T-cell (primary cell): ENCODE measurements at regions of chr10 and their contacts with region 1.

Region 1: GRCh38 chr10:116683821-116684220 is 58.5 kb downstream of the HSPA12A start:
- DNase-seq: no peak
- ATAC-seq: no peak
- H3K4me3 ChIP-seq: no peak overlapping the region
- H3K4me3 Mint-ChIP-seq: no peak overlapping the region
- H3K27ac ChIP-seq: no peak overlapping the region
- H3K27ac Mint-ChIP-seq: no peak overlapping the region
- H3K4me1 ChIP-seq: peaks cover 0 to 5% of the 10 kb centered on the region in 2 experiments
- H3K4me1 Mint-ChIP-seq: peaks cover 0 to 2% (median 0%) of the 10 kb centered on the region in 3 donors
- H3K27me3 ChIP-seq: peaks cover 0 to 24% of the 10 kb centered on the region in 2 experiments
- H3K27me3 Mint-ChIP-seq: peaks cover 20 to 43% of the 10 kb centered on the region in 2 donors

Region 2: GRCh38 chr10:116787893-116788665 is 104.3 kb after region 1 on chr10:
- CTCF ChIA-PET with region 1: interaction called, 23 read pairs
- POLR2A ChIA-PET with region 1: no interaction called
- DNase-seq: peak; percentile 60 to 83 (median 73)
- ATAC-seq: peak; percentile 86 to 96 (median 88)
- H3K4me3 ChIP-seq: peak overlapping the region; percentile 6 to 55
- H3K4me3 Mint-ChIP-seq: peak overlapping the region; percentile 21 to 56 (median 52)
- H3K27ac ChIP-seq: no peak overlapping the region
- H3K27ac Mint-ChIP-seq: peak overlapping the region in 1 of 2 donors; percentile 16
- H3K4me1 ChIP-seq: peaks cover 0 to 8% of the 10 kb centered on the region in 2 experiments
- H3K4me1 Mint-ChIP-seq: peaks cover 14 to 15% (median 15%) of the 10 kb centered on the region in 3 donors
- H3K27me3 ChIP-seq: peaks cover 0 to 37% of the 10 kb centered on the region in 2 experiments
- H3K27me3 Mint-ChIP-seq: peaks cover 21 to 22% of the 10 kb centered on the region in 2 donors